Activated CD8-positive, alpha-beta T cell treated with anti-CD3 and anti-CD28 coated beads for 36 hours (primary cell): ENCODE measurements at regions of chr20 and their contacts with region 1.

Region 1: GRCh38 chr20:50790651-50791277 is 4.1 kb upstream of the BCAS4 start:
- DNase-seq: peak; percentile 88
- ATAC-seq: peak; percentile 75
- H3K4me3 Mint-ChIP-seq: no peak overlapping the region
- H3K27ac Mint-ChIP-seq: peak overlapping the region; percentile 79
- H3K4me1 Mint-ChIP-seq: peaks cover 9% of the 10 kb centered on the region
- H3K27me3 Mint-ChIP-seq: no peaks in the 10 kb centered on the region
- CTCF ChIP-seq: peak; percentile 78

Region 2: DNA sequence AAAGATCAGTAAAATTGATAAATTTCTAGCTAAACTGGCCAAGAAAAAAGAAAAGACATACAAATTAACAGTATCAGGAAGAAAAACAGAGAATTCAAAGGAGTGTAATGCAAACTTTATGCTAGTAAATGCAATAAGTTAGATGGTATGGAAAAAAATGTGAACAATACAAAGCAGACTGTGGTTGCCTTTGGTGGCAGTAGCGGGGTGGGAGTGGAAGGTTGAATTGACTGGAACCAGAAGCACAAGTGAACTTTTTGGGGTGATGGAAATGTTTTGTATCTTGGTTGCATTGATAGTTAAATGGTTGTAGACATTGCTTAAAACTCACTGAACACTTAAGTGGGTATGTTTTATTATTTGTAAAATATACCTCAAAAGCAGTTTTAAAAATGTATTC is 235.6 kb before region 1 on chr20:
- CTCF ChIA-PET with region 1: no interaction called
- POLR2A ChIA-PET with region 1: no interaction called
- intact Hi-C with region 1: no loop called
- DNase-seq: peak; percentile 45
- ATAC-seq: no peak
- H3K4me3 Mint-ChIP-seq: no peak overlapping the region
- H3K27ac Mint-ChIP-seq: no peak overlapping the region
- H3K4me1 Mint-ChIP-seq: peaks cover 22% of the 10 kb centered on the region
- H3K27me3 Mint-ChIP-seq: no peaks in the 10 kb centered on the region
- CTCF ChIP-seq: no peak

Region 3: DNA sequence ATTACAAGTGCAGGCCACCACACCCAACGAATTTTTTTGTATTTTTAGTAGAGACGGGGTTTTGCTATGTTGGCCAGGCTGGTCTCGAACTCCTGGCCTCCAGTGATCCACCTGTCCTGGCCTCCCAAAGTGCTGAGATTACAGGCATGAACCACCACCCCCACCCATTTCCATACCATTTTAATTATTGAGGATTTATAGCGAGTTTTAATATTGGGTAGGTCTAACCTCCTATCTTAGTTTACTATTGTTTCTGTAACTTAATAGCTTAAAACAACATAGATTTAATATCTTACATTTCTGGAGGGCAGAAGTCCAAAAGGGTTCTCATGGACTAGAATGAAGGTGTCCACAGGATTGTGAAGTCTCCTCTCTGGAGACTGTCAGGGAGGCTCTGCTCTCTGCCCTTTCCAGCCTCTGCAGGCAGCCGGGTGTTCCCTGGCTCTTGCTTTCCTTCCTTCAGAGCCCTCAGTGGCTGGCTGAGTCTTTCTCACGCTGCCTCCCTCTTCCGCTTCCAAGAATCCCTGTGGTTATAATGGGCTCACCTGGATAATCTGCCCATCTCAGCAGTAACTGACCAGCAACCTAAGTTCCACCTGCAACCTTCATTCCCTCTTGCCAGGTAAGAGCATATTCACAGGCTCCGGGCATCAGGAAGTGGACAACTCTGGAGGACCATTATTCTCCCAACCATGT is 14.5 kb before region 1 on chr20:
- CTCF ChIA-PET with region 1: interaction called, 14 read pairs
- POLR2A ChIA-PET with region 1: interaction called, 3 read pairs
- intact Hi-C with region 1: no loop called
- DNase-seq: no peak
- ATAC-seq: no peak
- H3K4me3 Mint-ChIP-seq: no peak overlapping the region
- H3K27ac Mint-ChIP-seq: no peak overlapping the region
- H3K4me1 Mint-ChIP-seq: peaks cover 6% of the 10 kb centered on the region
- H3K27me3 Mint-ChIP-seq: no peaks in the 10 kb centered on the region
- CTCF ChIP-seq: no peak

Region 4: GRCh38 chr20:50815162-50815989 is 24.6 kb after region 1 on chr20:
- CTCF ChIA-PET with region 1: interaction called, 112 read pairs
- POLR2A ChIA-PET with region 1: interaction called, 25 read pairs
- intact Hi-C with region 1: no loop called
- DNase-seq: peak; percentile 45
- ATAC-seq: peak; percentile 38
- H3K4me3 Mint-ChIP-seq: peak overlapping the region; percentile 69
- H3K27ac Mint-ChIP-seq: peak overlapping the region; percentile 90
- H3K4me1 Mint-ChIP-seq: peaks cover 64% of the 10 kb centered on the region
- H3K27me3 Mint-ChIP-seq: no peaks in the 10 kb centered on the region
- CTCF ChIP-seq: no peak

Region 5: DNA sequence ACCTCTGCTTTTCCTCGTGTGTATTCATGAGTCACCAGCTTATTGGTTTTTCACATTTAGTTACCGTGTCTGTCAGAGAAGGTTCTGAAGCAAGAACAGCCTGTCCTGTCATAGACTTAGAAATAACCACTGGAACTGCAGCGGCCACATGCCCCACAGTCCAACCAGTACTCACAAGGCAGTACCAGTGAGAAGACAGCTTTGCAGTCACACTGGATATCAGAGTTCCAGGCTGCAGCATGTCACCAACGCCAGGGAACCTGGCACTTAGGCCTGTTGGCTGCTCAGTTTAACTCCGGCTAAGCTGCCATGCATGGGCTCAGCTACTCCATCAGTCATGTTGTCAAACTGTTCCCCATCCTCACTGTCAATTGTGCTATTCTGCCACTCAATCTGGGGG is 100.4 kb after region 1 on chr20:
- CTCF ChIA-PET with region 1: interaction called, 21 read pairs
- POLR2A ChIA-PET with region 1: interaction called, 4 read pairs
- intact Hi-C with region 1: no loop called
- DNase-seq: no peak
- ATAC-seq: peak; percentile 21
- H3K4me3 Mint-ChIP-seq: no peak overlapping the region
- H3K27ac Mint-ChIP-seq: peak overlapping the region; percentile 79
- H3K4me1 Mint-ChIP-seq: peaks cover 31% of the 10 kb centered on the region
- H3K27me3 Mint-ChIP-seq: no peaks in the 10 kb centered on the region
- CTCF ChIP-seq: no peak

Region 6: DNA sequence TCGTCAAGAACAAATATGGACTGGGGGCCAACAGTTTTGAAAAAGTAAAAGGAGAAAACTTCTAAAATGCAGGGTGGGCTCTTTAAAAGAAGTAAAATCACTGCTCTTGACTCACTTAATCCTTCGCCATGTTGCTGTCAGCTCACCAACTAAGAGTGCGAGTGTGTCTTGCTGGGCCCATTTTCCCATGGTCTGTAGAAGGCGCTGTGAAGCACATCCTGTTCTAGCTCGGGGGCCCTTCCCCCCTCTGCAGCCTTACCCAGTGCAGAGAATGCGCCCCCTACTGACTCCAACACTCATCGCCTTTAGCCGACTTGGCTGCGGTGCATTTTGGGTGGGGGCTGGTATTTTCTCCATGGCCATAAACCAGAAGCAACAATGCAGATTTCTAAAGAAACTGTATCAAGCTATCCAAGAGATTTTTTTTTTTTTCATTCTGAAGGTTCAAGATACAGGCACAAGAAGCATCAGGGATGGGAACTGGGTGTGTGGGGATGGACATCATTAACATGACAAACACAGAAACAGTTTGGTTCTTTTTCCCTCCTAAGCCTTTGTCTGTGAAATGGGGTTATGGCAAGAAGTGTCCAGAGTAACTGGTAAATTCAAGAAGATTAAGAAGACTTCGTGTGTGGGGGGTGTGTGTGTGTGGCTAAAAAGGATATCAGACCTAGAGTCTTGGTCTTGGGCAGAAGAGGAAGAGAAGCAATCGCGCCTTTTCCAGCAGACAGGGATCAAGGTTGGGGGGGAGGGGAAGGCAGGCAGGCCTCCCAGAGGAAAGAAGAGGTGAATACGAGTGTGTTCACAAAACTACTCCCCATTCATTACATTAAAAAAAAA is 138.8 kb after region 1 on chr20:
- CTCF ChIA-PET with region 1: interaction called, 253 read pairs
- POLR2A ChIA-PET with region 1: interaction called, 48 read pairs
- intact Hi-C with region 1: loop called (anchors 5 kb)
- DNase-seq: peak; percentile 99
- ATAC-seq: peak; percentile 79
- H3K4me3 Mint-ChIP-seq: peak overlapping the region; percentile 82
- H3K27ac Mint-ChIP-seq: peak overlapping the region; percentile 92
- H3K4me1 Mint-ChIP-seq: peaks cover 50% of the 10 kb centered on the region
- H3K27me3 Mint-ChIP-seq: no peaks in the 10 kb centered on the region
- CTCF ChIP-seq: peak; percentile 81

Region 7: DNA sequence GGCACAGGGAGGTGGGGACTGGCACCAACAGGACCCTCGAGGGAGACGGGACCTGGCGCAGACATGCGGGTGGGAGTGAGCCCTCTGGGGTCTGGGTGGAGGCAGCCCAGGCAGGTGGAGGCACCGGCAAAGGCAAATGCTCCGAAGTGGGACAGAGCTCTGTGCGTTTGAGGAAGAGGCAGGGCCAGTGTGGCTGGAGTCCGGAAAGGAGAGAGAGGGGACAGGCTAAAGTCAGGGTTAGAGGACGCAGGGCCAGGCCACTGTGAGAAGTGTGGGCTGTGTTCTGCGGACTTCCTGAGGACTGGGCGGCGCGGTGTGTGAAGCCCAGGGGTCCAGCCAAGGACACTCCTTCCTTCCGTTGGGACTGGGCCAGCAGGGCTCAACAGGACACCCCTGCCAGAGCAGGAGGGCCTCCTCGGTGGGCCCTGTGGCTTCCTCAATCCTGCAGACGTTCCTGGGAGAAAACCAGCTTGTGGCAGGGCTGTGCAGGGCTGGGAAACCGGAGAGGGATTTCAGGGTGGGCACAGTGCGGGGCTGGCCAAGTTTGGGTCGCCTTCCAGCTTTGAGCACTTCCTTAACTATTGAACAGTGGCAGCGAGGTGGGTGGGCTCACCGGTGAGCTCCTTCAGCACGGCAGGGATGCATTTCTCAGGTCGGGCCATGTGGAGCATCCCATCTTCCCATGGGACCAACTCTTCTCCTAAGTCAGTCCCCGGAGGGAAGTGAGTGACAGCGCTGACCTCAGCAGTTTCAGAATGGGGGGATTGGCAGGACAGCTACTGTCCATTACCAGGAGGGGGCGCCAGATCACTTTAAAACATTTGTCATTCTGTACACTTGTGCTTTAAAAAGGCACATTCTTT is 190.3 kb after region 1 on chr20:
- CTCF ChIA-PET with region 1: interaction called, 19 read pairs
- POLR2A ChIA-PET with region 1: no interaction called
- intact Hi-C with region 1: no loop called
- DNase-seq: peak; percentile 80
- ATAC-seq: peak; percentile 43
- H3K4me3 Mint-ChIP-seq: no peak overlapping the region
- H3K27ac Mint-ChIP-seq: peak overlapping the region; percentile 83
- H3K4me1 Mint-ChIP-seq: peaks cover 18% of the 10 kb centered on the region
- H3K27me3 Mint-ChIP-seq: peaks cover 32% of the 10 kb centered on the region
- CTCF ChIP-seq: peak; percentile 92